Dendritic cell treated with granulocyte-macrophage colony-stimulating factor and Interleukin-4, amounts not matched to agents 40 ng/mL and 50 ng/mL, for 4 days (primary cell): ENCODE measurements at regions of chr10 and their contacts with region 1.

Region 1: GRCh38 chr10:5094265-5095205 is at the start of gene AKR1C3:
- H3K4me3 Mint-ChIP-seq: peak within 1 kb of the TSS; percentile 40
- H3K27ac Mint-ChIP-seq: no peak within 1 kb of the TSS
- H3K4me1 Mint-ChIP-seq: no peaks in the 10 kb centered on the region
- H3K27me3 Mint-ChIP-seq: no peaks in the 10 kb centered on the region

Region 2: DNA sequence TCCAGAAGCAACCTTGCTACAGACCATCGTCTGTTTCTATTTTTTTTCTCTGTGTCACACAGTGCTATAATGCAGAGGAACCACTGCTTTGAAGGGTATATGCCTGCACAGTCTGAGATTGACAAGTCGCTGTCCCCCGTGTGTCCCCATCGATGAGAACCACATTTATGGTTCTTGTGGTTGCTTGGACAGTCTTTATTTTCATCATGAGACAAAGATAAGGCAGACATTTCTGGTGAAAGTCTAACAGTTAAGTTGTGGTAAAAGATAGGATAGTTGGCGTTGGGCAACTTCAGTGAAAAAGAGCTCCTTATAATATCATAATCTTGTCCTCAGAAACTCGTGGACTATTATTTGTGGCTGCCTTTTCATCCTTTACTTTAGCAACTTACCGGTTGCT is 274.8 kb before region 1 on chr10:
- intact Hi-C with region 1: loop called (anchors 5 kb)
- H3K4me3 Mint-ChIP-seq: no peak overlapping the region
- H3K27ac Mint-ChIP-seq: peak overlapping the region; percentile 70
- H3K4me1 Mint-ChIP-seq: peaks cover 39% of the 10 kb centered on the region
- H3K27me3 Mint-ChIP-seq: peaks cover 11% of the 10 kb centered on the region

Region 3: DNA sequence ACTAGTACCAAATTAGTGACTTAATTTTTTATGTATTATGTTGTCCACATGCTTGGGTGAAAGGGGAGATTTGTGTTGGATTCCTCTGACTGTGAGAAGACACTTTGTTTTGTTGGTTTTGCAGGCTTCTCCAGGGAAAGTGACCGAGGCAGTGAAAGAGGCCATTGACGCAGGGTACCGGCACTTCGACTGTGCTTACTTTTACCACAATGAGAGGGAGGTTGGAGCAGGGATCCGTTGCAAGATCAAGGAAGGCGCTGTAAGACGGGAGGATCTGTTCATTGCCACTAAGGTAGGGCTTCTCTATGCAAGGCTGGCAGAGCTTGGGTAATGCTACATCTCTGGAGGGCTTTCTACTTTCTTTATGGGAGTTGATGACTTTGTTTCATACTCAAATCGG is 264.0 kb before region 1 on chr10:
- intact Hi-C with region 1: no loop called
- H3K4me3 Mint-ChIP-seq: no peak overlapping the region
- H3K27ac Mint-ChIP-seq: no peak overlapping the region
- H3K4me1 Mint-ChIP-seq: peaks cover 18% of the 10 kb centered on the region
- H3K27me3 Mint-ChIP-seq: peaks cover 21% of the 10 kb centered on the region

Region 4: DNA sequence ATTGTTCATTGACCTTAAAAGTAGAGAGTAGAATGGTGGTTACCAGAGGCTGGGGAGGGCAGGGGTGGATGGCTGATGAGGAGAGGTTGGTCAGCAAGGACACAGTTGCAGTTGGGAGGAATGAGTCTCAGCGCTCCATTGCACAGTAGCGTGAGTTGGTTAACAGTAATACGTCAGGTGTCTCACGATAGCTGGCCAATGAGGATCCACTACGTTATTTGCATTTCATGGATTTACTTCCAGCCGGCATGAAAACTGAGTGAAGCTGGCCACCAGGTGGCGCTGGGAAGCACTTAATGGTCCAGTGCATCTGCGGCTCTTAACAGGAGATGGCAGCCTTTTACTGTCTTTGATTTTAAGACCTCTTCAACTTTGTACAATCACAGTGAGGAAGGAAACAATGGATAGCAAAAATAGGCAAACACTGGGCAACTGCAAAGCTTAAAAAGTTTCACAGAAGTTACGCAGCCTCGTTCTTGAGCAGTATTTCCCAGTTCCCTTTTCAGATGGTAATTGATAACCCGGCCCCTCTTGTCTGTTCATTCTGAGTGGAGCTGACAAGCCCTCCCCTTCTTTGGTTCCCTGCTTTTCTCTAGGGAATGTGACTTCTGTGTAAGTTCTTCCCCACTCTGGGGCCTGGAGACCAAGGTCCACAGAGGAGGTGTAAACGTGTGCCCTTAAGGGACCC is 244.8 kb before region 1 on chr10:
- intact Hi-C with region 1: loop called (anchors 10 kb)
- H3K4me3 Mint-ChIP-seq: peak overlapping the region; percentile 2
- H3K27ac Mint-ChIP-seq: no peak overlapping the region
- H3K4me1 Mint-ChIP-seq: peaks cover 30% of the 10 kb centered on the region
- H3K27me3 Mint-ChIP-seq: no peaks in the 10 kb centered on the region

Region 5: GRCh38 chr10:5283305-5284158 is 189.0 kb after region 1 on chr10:
- intact Hi-C with region 1: loop called (anchors 5 kb)
- H3K4me3 Mint-ChIP-seq: no peak overlapping the region
- H3K27ac Mint-ChIP-seq: peak overlapping the region; percentile 86
- H3K4me1 Mint-ChIP-seq: peaks cover 51% of the 10 kb centered on the region
- H3K27me3 Mint-ChIP-seq: peaks cover 3% of the 10 kb centered on the region

Region 6: GRCh38 chr10:5305374-5305773 is 210.8 kb after region 1 on chr10:
- intact Hi-C with region 1: no loop called
- H3K4me3 Mint-ChIP-seq: no peak overlapping the region
- H3K27ac Mint-ChIP-seq: no peak overlapping the region
- H3K4me1 Mint-ChIP-seq: no peaks in the 10 kb centered on the region
- H3K27me3 Mint-ChIP-seq: no peaks in the 10 kb centered on the region

Region 7: DNA sequence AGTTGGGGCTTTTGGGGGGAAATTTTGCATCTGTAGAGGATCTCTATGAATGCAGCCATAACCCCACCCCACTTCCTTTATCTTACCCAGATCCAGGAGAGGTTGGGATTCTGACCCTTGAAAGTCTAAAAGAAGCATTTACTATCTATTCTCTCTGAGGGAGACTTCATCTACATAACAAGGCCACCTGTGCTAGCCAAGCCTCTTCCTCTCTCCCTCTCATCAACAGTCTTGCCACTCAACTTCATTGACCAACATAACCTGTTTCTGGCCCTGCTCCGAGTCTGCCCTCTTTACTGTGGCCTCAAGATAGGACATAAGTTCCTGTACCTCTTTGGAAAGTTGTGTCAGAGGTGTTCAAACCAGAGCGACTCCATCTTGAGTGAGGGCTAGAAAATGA is 290.7 kb after region 1 on chr10:
- intact Hi-C with region 1: loop called (anchors 10 kb)
- H3K4me3 Mint-ChIP-seq: no peak overlapping the region
- H3K27ac Mint-ChIP-seq: no peak overlapping the region
- H3K4me1 Mint-ChIP-seq: no peaks in the 10 kb centered on the region
- H3K27me3 Mint-ChIP-seq: no peaks in the 10 kb centered on the region

Region 8: GRCh38 chr10:5434017-5434753 is 339.6 kb after region 1 on chr10:
- intact Hi-C with region 1: loop called (anchors 5 kb)
- H3K4me3 Mint-ChIP-seq: no peak overlapping the region
- H3K27ac Mint-ChIP-seq: no peak overlapping the region
- H3K4me1 Mint-ChIP-seq: peaks cover 7% of the 10 kb centered on the region
- H3K27me3 Mint-ChIP-seq: no peaks in the 10 kb centered on the region